ENCODE measurements at regions of chr7 and their contacts with region 1.

Region 1: GRCh38 chr7:46569133-46569465 is 648.0 kb upstream of the IGFBP3 start:
- DNase-seq: peak; percentile 85 to 87
- H3K4me3 ChIP-seq: no peak overlapping the region
- H3K27ac ChIP-seq: 0 out of 2 replicates have a peak overlapping the region, but pooled peaks have one; percentile 5
- H3K4me1 ChIP-seq: peaks cover 30% of the 10 kb centered on the region
- H3K27me3 ChIP-seq: no peaks in the 10 kb centered on the region
- CTCF ChIP-seq: no peak

Region 2: GRCh38 chr7:46139079-46139478 is 430.0 kb before region 1 on chr7:
- CTCF ChIA-PET with region 1: no interaction called
- POLR2A ChIA-PET with region 1: interaction called, 10 read pairs
- intact Hi-C with region 1: no loop called
- DNase-seq: peak; percentile 40 to 100
- H3K4me3 ChIP-seq: no peak overlapping the region
- H3K27ac ChIP-seq: peak overlapping the region; percentile 83
- H3K4me1 ChIP-seq: peaks cover 29% of the 10 kb centered on the region
- H3K27me3 ChIP-seq: no peaks in the 10 kb centered on the region
- CTCF ChIP-seq: no peak

Region 3: GRCh38 chr7:46454816-46455215 is 114.3 kb before region 1 on chr7:
- CTCF ChIA-PET with region 1: no interaction called
- POLR2A ChIA-PET with region 1: interaction called, 6 read pairs
- intact Hi-C with region 1: loop called (anchors 5 kb)
- DNase-seq: no peak
- H3K4me3 ChIP-seq: no peak overlapping the region
- H3K27ac ChIP-seq: no peak overlapping the region
- H3K4me1 ChIP-seq: no peaks in the 10 kb centered on the region
- H3K27me3 ChIP-seq: no peaks in the 10 kb centered on the region
- CTCF ChIP-seq: no peak

Region 4: DNA sequence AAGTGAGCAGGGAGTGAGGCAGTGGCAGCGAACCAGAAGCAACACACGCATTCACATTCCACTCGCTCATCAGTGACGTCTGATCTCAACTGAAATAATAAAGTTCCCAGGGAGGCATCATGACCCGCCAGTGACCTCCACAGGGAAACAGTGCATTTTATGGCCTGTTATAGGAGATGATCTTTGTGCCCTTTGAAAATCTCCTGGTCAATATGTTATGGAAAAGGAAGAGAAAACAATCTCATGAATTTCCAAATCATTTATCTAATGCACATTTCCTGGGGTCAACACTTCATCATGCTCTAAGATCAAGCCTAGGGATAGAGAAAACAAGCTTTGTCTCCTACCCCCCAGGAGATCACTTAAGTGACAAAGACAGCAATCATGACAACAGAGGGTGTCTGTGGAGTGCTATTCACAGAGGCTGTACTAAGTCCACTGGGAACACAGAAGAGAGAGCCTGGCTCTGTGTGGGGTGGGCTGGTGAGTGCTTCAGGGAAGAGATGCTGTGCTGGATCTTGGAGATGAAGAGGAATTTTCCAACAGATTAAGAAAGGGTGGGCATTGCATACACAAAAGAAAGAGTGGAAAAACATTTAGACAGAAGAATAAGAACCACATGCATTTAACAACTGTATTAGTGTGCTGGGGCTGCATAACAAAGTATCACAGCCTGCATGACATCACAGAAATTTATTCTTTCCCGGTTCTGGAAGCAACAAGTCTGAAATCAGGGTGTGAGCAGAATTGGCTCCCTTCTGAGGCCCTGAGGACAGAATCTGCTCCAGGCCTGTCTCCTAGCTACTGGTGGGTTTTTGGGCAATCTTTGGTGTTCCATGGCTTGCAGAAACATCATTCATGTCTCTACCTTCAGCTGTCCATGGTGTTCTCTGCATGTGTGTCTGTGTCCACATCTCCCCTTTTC is 34.2 kb before region 1 on chr7:
- CTCF ChIA-PET with region 1: no interaction called
- POLR2A ChIA-PET with region 1: no interaction called
- intact Hi-C with region 1: no loop called
- DNase-seq: no peak
- H3K4me3 ChIP-seq: no peak overlapping the region
- H3K27ac ChIP-seq: no peak overlapping the region
- H3K4me1 ChIP-seq: no peaks in the 10 kb centered on the region
- H3K27me3 ChIP-seq: no peaks in the 10 kb centered on the region
- CTCF ChIP-seq: no peak

Region 5: DNA sequence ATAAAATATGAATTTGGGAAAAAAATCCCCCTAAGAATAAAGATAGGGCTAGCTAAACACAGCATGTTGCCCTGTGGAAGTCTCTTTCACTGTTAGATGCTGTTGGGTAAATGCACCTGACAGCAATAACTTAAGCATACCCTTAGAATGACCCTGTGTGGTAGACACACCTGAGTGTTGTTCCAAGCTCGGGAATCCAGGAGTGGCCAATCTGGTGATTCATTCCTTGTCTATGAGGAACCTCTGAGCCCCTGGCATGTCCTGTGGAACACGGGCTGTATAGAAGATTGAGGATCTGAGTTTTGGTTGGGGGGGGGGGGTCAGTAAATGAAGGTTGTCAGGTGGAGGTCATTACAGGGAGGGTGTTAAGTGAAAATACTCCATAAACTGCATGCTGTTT is 82.0 kb after region 1 on chr7:
- CTCF ChIA-PET with region 1: no interaction called
- POLR2A ChIA-PET with region 1: no interaction called
- intact Hi-C with region 1: loop called (anchors 1 kb)
- DNase-seq: peak; percentile 79 to 97
- H3K4me3 ChIP-seq: no peak overlapping the region
- H3K27ac ChIP-seq: peak overlapping the region; percentile 96
- H3K4me1 ChIP-seq: peaks cover 35% of the 10 kb centered on the region
- H3K27me3 ChIP-seq: no peaks in the 10 kb centered on the region
- CTCF ChIP-seq: no peak

Region 6: GRCh38 chr7:46745707-46746090 is 176.6 kb after region 1 on chr7:
- CTCF ChIA-PET with region 1: no interaction called
- POLR2A ChIA-PET with region 1: no interaction called
- intact Hi-C with region 1: no loop called
- DNase-seq: no peak
- H3K4me3 ChIP-seq: no peak overlapping the region
- H3K27ac ChIP-seq: no peak overlapping the region
- H3K4me1 ChIP-seq: 0 out of 2 replicates have a peak, but pooled peaks cover 3% of the 10 kb centered on the region
- H3K27me3 ChIP-seq: no peaks in the 10 kb centered on the region
- CTCF ChIP-seq: no peak

Region 7: DNA sequence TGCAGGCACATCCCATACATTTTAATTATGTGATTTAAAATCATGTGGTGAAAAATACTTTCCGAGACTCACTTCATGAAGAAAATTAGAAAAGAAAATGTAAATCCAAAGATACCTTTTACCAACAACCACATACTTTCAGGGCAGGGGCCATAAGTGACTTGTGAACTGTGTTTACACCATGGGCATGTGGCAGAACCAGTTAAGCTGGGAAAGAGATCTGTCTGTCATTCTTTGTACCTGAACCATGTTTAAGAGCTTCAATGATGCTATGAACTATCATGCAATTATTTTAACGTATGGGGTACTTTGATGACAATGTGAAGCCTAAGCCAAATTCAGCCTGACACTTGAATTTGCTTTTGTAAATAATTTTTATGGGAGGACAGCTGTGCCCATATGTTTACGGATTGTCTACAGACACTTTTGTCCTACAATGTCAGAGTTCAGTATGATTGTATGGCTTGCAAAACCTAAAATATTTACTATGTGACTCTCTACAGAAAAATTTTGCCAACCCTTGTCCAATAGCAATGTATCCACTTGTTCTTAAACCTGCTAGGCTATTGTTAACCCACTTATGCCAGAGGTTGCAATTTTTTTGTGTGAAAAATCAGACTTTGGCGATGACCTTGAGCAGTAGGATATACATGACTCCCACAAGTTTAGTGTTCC is 358.2 kb after region 1 on chr7:
- CTCF ChIA-PET with region 1: no interaction called
- POLR2A ChIA-PET with region 1: no interaction called
- intact Hi-C with region 1: loop called (anchors 5 kb)
- DNase-seq: peak; percentile 24 to 64
- H3K4me3 ChIP-seq: no peak overlapping the region
- H3K27ac ChIP-seq: 0 out of 2 replicates have a peak overlapping the region, but pooled peaks have one; percentile 1
- H3K4me1 ChIP-seq: peaks cover 35% of the 10 kb centered on the region
- H3K27me3 ChIP-seq: no peaks in the 10 kb centered on the region
- CTCF ChIP-seq: no peak